CD8-positive, alpha-beta T cell (primary cell): ENCODE measurements at regions of chr15 and their contacts with region 1.

Region 1: DNA sequence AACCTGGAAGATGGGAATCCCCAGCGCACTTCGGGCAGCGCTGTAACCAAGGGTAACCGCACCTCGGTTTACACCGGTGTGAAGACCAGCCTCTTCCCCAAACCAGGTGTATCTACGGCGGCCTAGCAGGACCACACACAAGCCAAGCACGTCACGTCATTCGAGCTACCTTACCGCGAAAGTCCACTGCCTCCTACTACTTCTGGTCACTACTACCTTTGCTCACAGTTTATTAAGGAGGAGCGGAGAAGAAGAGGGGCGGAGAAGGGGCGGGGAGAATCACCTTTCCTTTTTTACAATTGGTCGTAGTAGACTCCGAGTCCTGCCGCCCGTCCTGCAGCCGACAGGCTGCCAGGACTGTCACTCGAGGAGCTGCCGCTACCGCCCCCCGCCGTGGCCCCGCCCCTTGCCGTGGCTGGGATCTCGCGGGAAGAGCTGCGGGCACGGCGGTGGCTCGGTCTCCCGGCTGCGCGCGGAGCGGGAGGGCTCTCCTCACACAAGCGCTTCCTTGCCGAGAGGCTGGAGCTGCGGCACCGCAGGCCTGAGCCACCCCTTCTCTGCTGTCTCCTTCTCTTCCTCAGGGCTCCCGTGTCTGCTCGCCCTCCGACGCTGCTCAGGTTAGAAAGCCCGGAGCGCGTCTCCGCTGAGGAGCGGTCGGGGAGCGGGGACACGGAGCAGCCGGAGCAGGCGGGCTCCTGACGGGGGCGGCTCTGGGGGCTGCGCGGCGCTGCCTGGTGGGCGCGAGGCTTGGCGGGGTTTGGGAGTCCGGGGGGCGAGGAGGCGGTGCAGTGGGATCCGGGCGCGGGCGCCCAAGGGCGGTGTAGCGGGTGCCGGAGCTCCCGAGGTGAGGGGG is at the start of gene GLCE:
- DNase-seq: peak; percentile 85 to 96 (median 92)
- ATAC-seq: peak; percentile 93
- H3K4me3 ChIP-seq: peak within 1 kb of the TSS; percentile 73 to 91
- H3K4me3 Mint-ChIP-seq: peak within 1 kb of the TSS; percentile 96
- H3K27ac ChIP-seq: peak within 1 kb of the TSS; percentile 51 to 58
- H3K27ac Mint-ChIP-seq: peak within 1 kb of the TSS; percentile 89
- H3K4me1 ChIP-seq: peaks cover 12% of the 10 kb centered on the region
- H3K4me1 Mint-ChIP-seq: peaks cover 21% of the 10 kb centered on the region
- H3K27me3 ChIP-seq: no peaks in the 10 kb centered on the region
- H3K27me3 Mint-ChIP-seq: peaks cover 6% of the 10 kb centered on the region
- CTCF ChIP-seq: no peak
- total RNA-seq, gene GLCE: 4.1 to 4.2 TPM

Region 2: GRCh38 chr15:68285259-68285980 is 874.9 kb before region 1 on chr15:
- CTCF ChIA-PET with region 1: no interaction called
- POLR2A ChIA-PET with region 1: no interaction called
- intact Hi-C with region 1: loop called in 1 of 2 experiments (anchors 10 kb)
- DNase-seq: no peak
- ATAC-seq: no peak
- H3K4me3 ChIP-seq: no peak overlapping the region
- H3K4me3 Mint-ChIP-seq: no peak overlapping the region
- H3K27ac ChIP-seq: no peak overlapping the region
- H3K27ac Mint-ChIP-seq: no peak overlapping the region
- H3K4me1 ChIP-seq: peaks cover 56% of the 10 kb centered on the region
- H3K4me1 Mint-ChIP-seq: peaks cover 86% of the 10 kb centered on the region
- H3K27me3 ChIP-seq: no peaks in the 10 kb centered on the region
- H3K27me3 Mint-ChIP-seq: no peaks in the 10 kb centered on the region
- CTCF ChIP-seq: no peak

Region 3: DNA sequence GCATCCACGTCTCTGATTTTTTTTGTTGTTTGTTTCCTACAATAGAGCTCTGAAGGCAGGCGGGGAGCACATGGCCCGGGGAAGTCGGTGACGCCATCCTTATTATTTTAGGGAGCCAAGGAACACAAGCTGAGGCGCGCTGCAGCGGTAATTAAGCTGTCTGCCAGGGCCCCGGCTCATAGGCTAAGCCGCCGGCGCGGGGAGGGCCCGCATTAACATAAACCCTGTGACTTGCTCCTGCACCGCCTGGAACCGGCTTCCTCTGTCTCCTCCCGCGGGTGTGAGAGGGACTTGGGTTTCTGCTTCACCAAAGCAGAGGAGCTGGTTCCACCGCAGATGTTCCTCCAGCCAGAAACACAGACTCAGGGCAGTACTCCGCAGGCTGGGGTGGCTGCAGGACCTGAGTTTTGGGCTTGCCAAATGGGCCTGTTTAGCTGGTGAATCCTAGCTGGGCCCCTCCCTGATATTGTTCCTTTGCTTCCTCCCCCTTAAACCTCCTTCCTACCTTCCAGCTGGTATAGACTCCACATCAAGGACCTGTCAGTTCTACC is 365.0 kb before region 1 on chr15:
- CTCF ChIA-PET with region 1: no interaction called
- POLR2A ChIA-PET with region 1: no interaction called
- intact Hi-C with region 1: loop called in 1 of 2 experiments (anchors 10 kb)
- DNase-seq: peak in 8 of 9 experiments; percentile 33 to 77 (median 66)
- ATAC-seq: peak; percentile 59
- H3K4me3 ChIP-seq: peak overlapping the region; percentile 4 to 10
- H3K4me3 Mint-ChIP-seq: peak overlapping the region; percentile 59
- H3K27ac ChIP-seq: peak overlapping the region; percentile 22 to 59
- H3K27ac Mint-ChIP-seq: peak overlapping the region; percentile 88
- H3K4me1 ChIP-seq: peaks cover 83% of the 10 kb centered on the region
- H3K4me1 Mint-ChIP-seq: peaks cover 96% of the 10 kb centered on the region
- H3K27me3 ChIP-seq: no peaks in the 10 kb centered on the region
- H3K27me3 Mint-ChIP-seq: no peaks in the 10 kb centered on the region
- CTCF ChIP-seq: no peak

Region 4: DNA sequence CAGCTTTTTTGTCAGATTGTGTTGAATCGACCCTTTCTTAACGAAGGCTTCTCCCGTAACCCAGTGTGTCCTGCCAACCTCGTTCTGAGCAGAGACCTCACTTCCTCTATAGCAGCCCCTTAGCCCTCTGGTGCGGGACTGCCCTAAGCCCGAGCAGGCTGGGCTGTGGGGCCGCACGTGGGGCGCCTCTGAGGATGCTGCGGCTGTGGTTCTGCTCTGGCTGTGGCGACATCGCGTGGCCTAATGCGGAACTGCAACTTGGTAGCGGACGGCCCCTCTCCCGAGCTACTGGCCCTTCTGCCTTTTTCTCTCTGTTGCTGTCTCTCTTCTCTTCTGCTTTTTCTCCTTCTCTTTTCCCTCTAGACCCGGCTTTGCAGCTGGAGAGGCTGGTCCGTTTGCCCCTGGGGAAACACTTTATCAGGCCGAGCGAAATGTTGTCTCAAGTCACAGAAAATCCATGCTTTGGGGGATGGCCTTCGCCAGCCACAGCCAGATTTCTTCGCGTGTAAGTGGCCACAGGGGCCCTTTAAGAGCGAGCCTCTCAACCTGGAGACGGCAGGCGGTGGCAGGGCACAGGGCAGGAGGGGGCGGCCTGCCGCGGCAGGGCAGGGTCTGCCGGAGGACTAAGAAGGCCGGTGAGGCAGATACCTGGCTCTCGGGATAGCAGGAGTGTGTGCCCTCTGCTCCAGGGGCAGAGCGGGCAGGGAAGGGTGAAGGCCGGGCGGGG is 234.4 kb after region 1 on chr15:
- CTCF ChIA-PET with region 1: no interaction called
- POLR2A ChIA-PET with region 1: no interaction called
- intact Hi-C with region 1: loop called in 1 of 2 experiments (anchors 1 kb)
- DNase-seq: peak; percentile 66 to 90 (median 82)
- ATAC-seq: peak; percentile 99
- H3K4me3 ChIP-seq: no peak overlapping the region
- H3K4me3 Mint-ChIP-seq: no peak overlapping the region
- H3K27ac ChIP-seq: no peak overlapping the region
- H3K27ac Mint-ChIP-seq: no peak overlapping the region
- H3K4me1 ChIP-seq: peaks cover 10% of the 10 kb centered on the region
- H3K4me1 Mint-ChIP-seq: peaks cover 12% of the 10 kb centered on the region
- H3K27me3 ChIP-seq: no peaks in the 10 kb centered on the region
- H3K27me3 Mint-ChIP-seq: peaks cover 4% of the 10 kb centered on the region
- CTCF ChIP-seq: peak; percentile 96

Region 5: DNA sequence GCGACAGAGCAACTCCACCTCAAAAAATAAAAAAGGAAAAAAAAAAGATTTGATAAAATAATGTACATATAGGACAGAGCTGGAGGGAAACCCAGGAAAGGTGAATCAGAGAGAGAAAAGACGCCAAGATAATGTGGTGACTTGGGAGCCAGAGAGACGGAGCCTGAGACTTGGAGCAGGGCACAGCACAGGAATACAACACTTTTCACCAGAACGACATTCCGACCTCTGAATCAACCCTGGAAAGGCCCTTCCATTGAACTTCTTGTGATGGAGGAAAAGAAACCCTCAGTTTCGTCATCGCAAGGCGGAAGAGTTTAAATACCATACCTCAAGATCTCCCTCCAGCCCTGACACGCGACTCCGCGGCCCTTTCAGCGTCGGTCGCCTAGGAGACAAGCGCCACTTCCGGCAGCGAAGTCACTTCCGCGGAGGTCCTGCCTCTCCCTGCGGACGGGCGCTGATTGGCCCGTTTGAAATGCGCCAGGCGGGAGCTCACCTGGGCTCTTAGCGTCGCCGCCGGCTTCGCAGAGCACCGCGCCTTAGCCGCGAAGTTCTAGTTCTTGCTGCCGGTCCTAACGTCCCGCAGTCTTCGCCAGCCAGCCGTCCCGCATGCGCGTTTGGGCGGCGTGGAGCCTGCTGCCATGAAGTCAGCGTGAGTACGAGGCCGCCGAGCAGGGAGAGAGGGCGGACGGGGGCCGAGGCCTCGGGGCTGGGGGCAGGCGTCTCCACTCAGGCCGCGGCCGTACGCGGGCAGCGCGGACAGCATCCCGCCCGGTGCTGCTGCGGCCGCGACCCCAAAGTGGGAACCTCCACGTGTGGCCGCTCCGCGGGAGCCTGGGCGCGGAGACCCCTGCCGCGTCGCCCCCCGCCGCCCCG is 253.7 kb after region 1 on chr15 and contains the start of gene KIF23:
- CTCF ChIA-PET with region 1: no interaction called
- POLR2A ChIA-PET with region 1: no interaction called
- intact Hi-C with region 1: loop called (anchors 1 to 5 kb)
- DNase-seq: peak; percentile 81 to 97 (median 94)
- ATAC-seq: peak; percentile 98
- H3K4me3 ChIP-seq: peak within 1 kb of the TSS; percentile 72 to 75
- H3K4me3 Mint-ChIP-seq: peak within 1 kb of the TSS; percentile 88
- H3K27ac ChIP-seq: no peak within 1 kb of the TSS
- H3K27ac Mint-ChIP-seq: no peak within 1 kb of the TSS
- H3K4me1 ChIP-seq: peaks cover 7% of the 10 kb centered on the region
- H3K4me1 Mint-ChIP-seq: peaks cover 15% of the 10 kb centered on the region
- H3K27me3 ChIP-seq: peaks cover 2 to 5% of the 10 kb centered on the region in 2 experiments
- H3K27me3 Mint-ChIP-seq: peaks cover 21% of the 10 kb centered on the region
- CTCF ChIP-seq: no peak
- total RNA-seq, gene KIF23: 0.81 to 0.95 TPM

Region 6: DNA sequence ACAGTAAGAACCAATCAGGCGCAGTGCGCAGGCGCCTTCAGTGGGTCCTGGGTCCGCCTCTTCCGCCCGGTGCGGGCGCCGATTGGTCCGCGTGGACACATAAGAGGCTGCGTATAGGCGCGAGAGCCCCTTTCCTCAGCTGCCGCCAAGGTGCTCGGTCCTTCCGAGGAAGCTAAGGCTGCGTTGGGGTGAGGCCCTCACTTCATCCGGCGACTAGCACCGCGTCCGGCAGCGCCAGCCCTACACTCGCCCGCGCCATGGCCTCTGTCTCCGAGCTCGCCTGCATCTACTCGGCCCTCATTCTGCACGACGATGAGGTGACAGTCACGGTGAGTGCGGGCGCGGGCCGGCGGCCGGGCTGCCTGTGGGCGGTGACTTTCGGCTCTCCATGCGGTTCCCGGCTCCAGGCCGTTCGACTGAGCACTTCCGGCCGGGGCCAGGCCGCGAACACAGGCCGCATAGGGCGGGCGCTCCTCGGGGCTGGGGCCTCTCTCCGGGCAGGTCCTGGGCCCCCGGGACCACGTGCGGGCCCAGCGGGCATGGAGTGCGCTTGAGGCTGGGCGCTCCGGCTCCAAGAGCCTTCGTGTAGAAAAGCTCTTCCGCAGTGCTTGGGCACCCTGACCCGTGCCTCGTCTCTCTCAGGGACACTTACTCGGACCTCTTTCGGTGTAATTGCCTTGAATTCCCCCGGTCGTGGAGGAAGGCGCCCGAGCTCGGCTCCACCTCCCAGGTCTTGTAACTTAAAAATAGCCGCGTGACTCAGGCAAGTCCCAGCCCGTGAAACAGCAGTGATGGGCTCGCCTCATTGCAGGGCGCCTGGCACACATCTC is 292.5 kb after region 1 on chr15 and contains the start of gene RPLP1:
- CTCF ChIA-PET with region 1: no interaction called
- POLR2A ChIA-PET with region 1: interaction called, 7 read pairs
- intact Hi-C with region 1: loop called in 1 of 2 experiments (anchors 2 kb)
- DNase-seq: peak; percentile 91 to 97 (median 95)
- ATAC-seq: peak; percentile 88
- H3K4me3 ChIP-seq: peak within 1 kb of the TSS; percentile 86 to 91
- H3K4me3 Mint-ChIP-seq: peak within 1 kb of the TSS; percentile 97
- H3K27ac ChIP-seq: peak within 1 kb of the TSS; percentile 75 to 92
- H3K27ac Mint-ChIP-seq: peak within 1 kb of the TSS; percentile 99
- H3K4me1 ChIP-seq: peaks cover 32% of the 10 kb centered on the region
- H3K4me1 Mint-ChIP-seq: peaks cover 47% of the 10 kb centered on the region
- H3K27me3 ChIP-seq: no peaks in the 10 kb centered on the region
- H3K27me3 Mint-ChIP-seq: no peaks in the 10 kb centered on the region
- CTCF ChIP-seq: no peak
- total RNA-seq, gene RPLP1: 2,675 to 2,824 TPM

Region 7: GRCh38 chr15:69823218-69823907 is 663.0 kb after region 1 on chr15:
- CTCF ChIA-PET with region 1: no interaction called
- POLR2A ChIA-PET with region 1: no interaction called
- intact Hi-C with region 1: no loop called
- DNase-seq: peak in 1 of 9 experiments; percentile 10
- ATAC-seq: no peak
- H3K4me3 ChIP-seq: no peak overlapping the region
- H3K4me3 Mint-ChIP-seq: no peak overlapping the region
- H3K27ac ChIP-seq: no peak overlapping the region
- H3K27ac Mint-ChIP-seq: no peak overlapping the region
- H3K4me1 ChIP-seq: no peaks in the 10 kb centered on the region
- H3K4me1 Mint-ChIP-seq: no peaks in the 10 kb centered on the region
- H3K27me3 ChIP-seq: peaks cover 0 to 2% of the 10 kb centered on the region in 2 experiments
- H3K27me3 Mint-ChIP-seq: peaks cover 3% of the 10 kb centered on the region
- CTCF ChIP-seq: no peak